Activated T-helper 2 cell treated with anti-CD3 and anti-CD28 coated beads, Interferon-gamma antibody, Interleukin-2, Interleukin-4, amounts not matched to agents 10 μg/mL and 5 μg/mL and 100 μg/mL, durations not matched to agents 14 hours and 24 hours and 36 hours (primary cell): ENCODE measurements at regions of chr14 and their contacts with region 1.

Region 1: DNA sequence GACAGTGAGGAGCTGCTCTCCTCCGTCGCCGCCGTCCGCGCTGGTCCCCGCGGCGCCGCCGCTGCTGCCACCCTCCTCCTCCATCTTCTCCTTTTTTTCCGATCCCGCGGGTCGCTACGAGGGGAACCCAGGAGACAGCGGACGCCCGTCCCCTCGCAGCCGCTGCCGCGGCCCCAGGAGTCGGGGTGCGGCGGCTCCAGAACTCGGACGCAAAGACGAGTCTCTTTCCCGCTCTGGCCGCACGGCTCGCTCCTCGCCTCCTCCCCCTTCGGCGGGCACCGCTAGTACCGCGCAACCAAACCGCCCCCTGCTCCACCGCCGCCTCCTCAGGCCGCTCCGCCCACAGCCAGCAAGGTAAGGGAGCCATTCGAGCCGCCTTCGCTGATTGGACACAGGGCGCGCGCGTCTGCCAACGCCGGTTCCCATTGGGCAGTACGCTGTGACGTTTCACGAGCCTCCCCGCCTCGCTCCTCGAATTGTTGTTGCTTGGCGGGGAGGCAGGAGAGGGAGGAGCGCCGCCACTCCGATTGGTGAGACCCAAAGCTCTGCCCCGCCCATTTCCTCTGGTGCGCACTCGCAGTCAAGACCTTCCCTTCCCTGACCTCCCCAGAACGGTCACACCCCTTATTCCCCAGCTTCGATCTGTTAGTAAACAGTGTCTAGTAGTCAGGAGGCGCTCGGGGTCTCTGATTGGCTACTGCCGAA is at the start of gene RPS6KA5:
- DNase-seq: peak; percentile 100
- H3K4me3 Mint-ChIP-seq: peak within 1 kb of the TSS; percentile 81
- H3K27ac Mint-ChIP-seq: peak within 1 kb of the TSS; percentile 43
- H3K4me1 Mint-ChIP-seq: peaks cover 54% of the 10 kb centered on the region
- H3K27me3 Mint-ChIP-seq: no peaks in the 10 kb centered on the region
- total RNA-seq, gene RPS6KA5: 20.5 and 21.4 TPM in 2 replicates

Region 2: DNA sequence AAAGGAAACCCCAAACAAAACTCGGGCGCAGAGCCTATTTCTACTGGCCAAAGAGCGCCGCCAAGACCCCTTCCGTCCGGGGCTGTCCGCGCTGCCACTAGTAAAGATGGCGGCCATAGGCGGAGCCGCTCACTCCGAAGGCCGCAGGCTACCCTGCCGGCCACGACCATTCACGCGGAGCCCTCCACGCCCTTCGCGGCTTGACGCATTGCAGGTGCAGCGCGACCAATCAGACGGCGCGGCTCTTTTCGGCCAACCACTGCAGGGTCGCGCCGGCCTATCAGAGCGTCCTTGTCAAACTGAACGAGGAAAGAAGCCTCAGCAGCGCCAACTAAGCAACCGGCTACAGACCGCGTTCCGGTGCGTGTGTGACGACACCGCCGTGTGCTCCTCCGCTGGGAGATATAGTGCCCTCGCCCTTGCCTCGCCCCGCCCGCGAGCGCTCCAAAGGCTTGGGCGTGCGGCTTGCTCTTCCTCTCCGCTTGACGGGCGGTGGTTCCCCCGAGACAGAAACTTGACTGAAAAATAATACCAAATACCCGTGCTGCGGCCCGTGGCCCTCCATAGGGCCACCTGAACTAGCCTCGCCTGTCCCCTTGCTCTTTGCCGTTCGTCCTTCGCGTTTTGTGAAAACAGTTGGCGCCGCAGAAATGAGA is 677.3 kb before region 1 on chr14:
- intact Hi-C with region 1: loop called (anchors 5 kb)
- DNase-seq: peak; percentile 98
- H3K4me3 Mint-ChIP-seq: no peak overlapping the region
- H3K27ac Mint-ChIP-seq: no peak overlapping the region
- H3K4me1 Mint-ChIP-seq: peaks cover 15% of the 10 kb centered on the region
- H3K27me3 Mint-ChIP-seq: no peaks in the 10 kb centered on the region

Region 3: GRCh38 chr14:90970167-90970600 is 90.3 kb before region 1 on chr14:
- intact Hi-C with region 1: loop called (anchors 1 kb)
- DNase-seq: no peak
- H3K4me3 Mint-ChIP-seq: peak overlapping the region; percentile 66
- H3K27ac Mint-ChIP-seq: peak overlapping the region; percentile 93
- H3K4me1 Mint-ChIP-seq: peaks cover 45% of the 10 kb centered on the region
- H3K27me3 Mint-ChIP-seq: no peaks in the 10 kb centered on the region

Region 4: GRCh38 chr14:90999299-90999698 is 61.2 kb before region 1 on chr14:
- intact Hi-C with region 1: no loop called
- DNase-seq: no peak
- H3K4me3 Mint-ChIP-seq: no peak overlapping the region
- H3K27ac Mint-ChIP-seq: no peak overlapping the region
- H3K4me1 Mint-ChIP-seq: peaks cover 26% of the 10 kb centered on the region
- H3K27me3 Mint-ChIP-seq: no peaks in the 10 kb centered on the region

Region 5: DNA sequence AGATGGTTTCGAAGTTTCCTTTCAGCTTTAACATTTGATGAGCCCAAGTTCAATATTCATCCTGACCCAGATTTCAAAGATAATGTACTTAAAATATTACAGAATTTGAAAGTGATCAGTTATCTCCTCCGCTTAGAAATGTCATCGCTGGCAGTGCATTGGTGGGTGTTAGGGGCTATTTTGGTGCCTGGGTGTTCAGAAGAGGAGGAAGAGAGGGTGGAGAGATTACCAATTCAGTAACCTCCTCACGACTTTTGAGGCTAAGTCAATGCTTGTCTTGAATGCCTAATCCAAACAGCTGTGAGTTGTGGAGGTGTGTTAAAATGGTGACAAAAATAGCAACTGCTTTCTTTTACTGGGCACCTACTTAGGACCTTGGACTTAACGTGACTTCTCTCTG is 39.6 kb after region 1 on chr14:
- intact Hi-C with region 1: loop called (anchors 1 kb)
- DNase-seq: no peak
- H3K4me3 Mint-ChIP-seq: no peak overlapping the region
- H3K27ac Mint-ChIP-seq: peak overlapping the region; percentile 75
- H3K4me1 Mint-ChIP-seq: peaks cover 36% of the 10 kb centered on the region
- H3K27me3 Mint-ChIP-seq: no peaks in the 10 kb centered on the region

Region 6: DNA sequence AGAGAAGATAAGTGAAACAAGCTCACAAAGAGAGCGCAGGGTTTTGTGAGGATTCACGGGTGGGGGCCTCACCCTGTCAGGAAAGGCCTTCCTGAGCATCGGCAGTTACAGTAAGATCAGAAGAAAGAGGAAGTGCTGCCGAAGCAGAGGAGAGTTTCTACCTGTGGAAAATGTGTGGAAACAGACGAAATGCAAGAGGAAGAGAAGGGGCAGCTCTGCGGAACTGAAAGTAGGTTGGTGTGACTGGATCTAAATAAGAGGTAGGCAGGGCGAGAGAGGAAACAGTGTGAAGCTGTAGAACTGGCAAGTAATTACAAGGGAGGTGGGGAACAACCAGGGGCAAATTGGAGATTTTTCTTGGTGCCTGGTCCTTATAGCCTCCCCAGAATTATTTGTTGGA is 181.4 kb after region 1 on chr14:
- intact Hi-C with region 1: loop called (anchors 2 kb)
- DNase-seq: peak; percentile 40
- H3K4me3 Mint-ChIP-seq: peak overlapping the region; percentile 84
- H3K27ac Mint-ChIP-seq: peak overlapping the region; percentile 84
- H3K4me1 Mint-ChIP-seq: peaks cover 79% of the 10 kb centered on the region
- H3K27me3 Mint-ChIP-seq: no peaks in the 10 kb centered on the region

Region 7: GRCh38 chr14:91418387-91419043 is 358.0 kb after region 1 on chr14:
- intact Hi-C with region 1: loop called (anchors 5 kb)
- DNase-seq: peak; percentile 75
- H3K4me3 Mint-ChIP-seq: peak overlapping the region; percentile 67
- H3K27ac Mint-ChIP-seq: peak overlapping the region; percentile 85
- H3K4me1 Mint-ChIP-seq: peaks cover 36% of the 10 kb centered on the region
- H3K27me3 Mint-ChIP-seq: no peaks in the 10 kb centered on the region